ENCODE measurements at regions of chr16 and their contacts with region 1.

Region 1: DNA sequence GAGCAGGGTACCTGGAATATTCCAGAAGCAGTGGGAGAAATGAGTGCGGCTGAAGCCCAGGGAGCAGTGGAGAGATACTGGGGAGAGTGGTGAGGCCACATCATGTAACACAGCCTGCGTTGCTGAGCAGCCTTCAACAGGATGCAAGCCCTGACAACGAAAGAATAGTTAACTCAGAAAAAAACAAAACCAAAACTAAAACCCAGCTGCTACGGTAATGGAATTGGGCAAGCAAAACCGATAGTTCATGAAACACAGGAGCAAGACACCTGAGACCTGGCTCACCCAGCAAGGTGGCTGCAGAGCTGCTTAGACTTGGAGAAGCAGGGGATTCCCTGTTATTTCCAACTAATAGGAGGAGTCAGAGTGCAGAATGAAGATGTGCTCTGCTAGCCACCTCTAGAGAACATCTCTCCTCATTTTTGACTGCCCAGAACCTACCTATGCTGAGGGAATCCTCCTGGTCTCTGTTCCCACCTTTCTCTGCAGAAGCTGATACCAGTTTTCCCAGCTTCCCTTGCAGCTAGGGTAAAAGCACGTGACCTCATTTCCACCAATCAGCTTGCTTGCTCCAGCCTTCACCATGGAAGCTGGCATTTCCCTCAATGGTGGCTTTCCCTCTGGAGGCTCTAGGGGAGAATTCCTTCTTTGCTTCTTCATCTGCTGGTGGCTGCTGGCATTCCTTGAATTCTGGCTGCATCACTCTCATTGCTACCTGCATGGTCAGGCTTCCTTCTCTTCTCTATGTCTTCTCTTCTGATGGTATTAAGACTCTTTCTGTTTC is 59.4 kb upstream of the XYLT1 start:
- DNase-seq: peak; percentile 51
- ATAC-seq: peak; percentile 85
- H3K4me3 ChIP-seq: peak overlapping the region; percentile 41; the same call in 1 of the 2 replicates
- H3K27ac ChIP-seq: peak overlapping the region; percentile 13; the same call in 1 of the 2 replicates
- H3K4me1 ChIP-seq: peaks cover 33% of the 10 kb centered on the region
- H3K27me3 ChIP-seq: no peaks in the 10 kb centered on the region
- CTCF ChIP-seq: no peak
- EP300 ChIP-seq: no peak
- POLR2A ChIP-seq: no peak
- RAD21 ChIP-seq: no peak

Region 2: GRCh38 chr16:17404941-17405689 is 125.1 kb before region 1 on chr16:
- CTCF ChIA-PET with region 1: no interaction called
- POLR2A ChIA-PET with region 1: interaction called, 4 read pairs
- RAD21 ChIA-PET with region 1: no interaction called
- SMC1A ChIA-PET with region 1: no interaction called
- in situ Hi-C with region 1: no loop called
- intact Hi-C with region 1: loop called (anchors 10 kb)
- DNase-seq: no peak
- ATAC-seq: no peak
- H3K4me3 ChIP-seq: no peak overlapping the region
- H3K27ac ChIP-seq: no peak overlapping the region
- H3K4me1 ChIP-seq: peaks cover 24% of the 10 kb centered on the region
- H3K27me3 ChIP-seq: no peaks in the 10 kb centered on the region
- CTCF ChIP-seq: no peak
- EP300 ChIP-seq: no peak
- POLR2A ChIP-seq: no peak
- RAD21 ChIP-seq: no peak

Region 3: GRCh38 chr16:17476414-17477270 is 53.5 kb before region 1 on chr16:
- CTCF ChIA-PET with region 1: interaction called, 3 read pairs
- POLR2A ChIA-PET with region 1: no interaction called
- RAD21 ChIA-PET with region 1: interaction called, 4 read pairs
- SMC1A ChIA-PET with region 1: no interaction called
- in situ Hi-C with region 1: no loop called
- intact Hi-C with region 1: loop called (anchors 5 kb)
- DNase-seq: no peak
- ATAC-seq: peak; percentile 85
- H3K4me3 ChIP-seq: no peak overlapping the region
- H3K27ac ChIP-seq: no peak overlapping the region
- H3K4me1 ChIP-seq: peaks cover 18% of the 10 kb centered on the region
- H3K27me3 ChIP-seq: no peaks in the 10 kb centered on the region
- CTCF ChIP-seq: peak; percentile 49 to 64 (median 50); a peak in 5 of 6 replicates
- EP300 ChIP-seq: no peak
- POLR2A ChIP-seq: no peak
- RAD21 ChIP-seq: peak; percentile 70

Region 4: GRCh38 chr16:17555176-17555575 is 25.0 kb after region 1 on chr16:
- CTCF ChIA-PET with region 1: no interaction called
- POLR2A ChIA-PET with region 1: no interaction called
- RAD21 ChIA-PET with region 1: no interaction called
- SMC1A ChIA-PET with region 1: no interaction called
- in situ Hi-C with region 1: no loop called
- intact Hi-C with region 1: no loop called
- DNase-seq: no peak
- ATAC-seq: no peak
- H3K4me3 ChIP-seq: no peak overlapping the region
- H3K27ac ChIP-seq: no peak overlapping the region
- H3K4me1 ChIP-seq: peaks cover 7% of the 10 kb centered on the region; the same call in 1 of the 2 replicates
- H3K27me3 ChIP-seq: no peaks in the 10 kb centered on the region; a peak in 2 of 4 replicates
- CTCF ChIP-seq: no peak
- EP300 ChIP-seq: no peak
- POLR2A ChIP-seq: no peak
- RAD21 ChIP-seq: no peak

Measured in GM12878 (cell line).